MCF 10A (cell line): ENCODE measurements at regions of chr3 and their contacts with region 1.

Region 1: DNA sequence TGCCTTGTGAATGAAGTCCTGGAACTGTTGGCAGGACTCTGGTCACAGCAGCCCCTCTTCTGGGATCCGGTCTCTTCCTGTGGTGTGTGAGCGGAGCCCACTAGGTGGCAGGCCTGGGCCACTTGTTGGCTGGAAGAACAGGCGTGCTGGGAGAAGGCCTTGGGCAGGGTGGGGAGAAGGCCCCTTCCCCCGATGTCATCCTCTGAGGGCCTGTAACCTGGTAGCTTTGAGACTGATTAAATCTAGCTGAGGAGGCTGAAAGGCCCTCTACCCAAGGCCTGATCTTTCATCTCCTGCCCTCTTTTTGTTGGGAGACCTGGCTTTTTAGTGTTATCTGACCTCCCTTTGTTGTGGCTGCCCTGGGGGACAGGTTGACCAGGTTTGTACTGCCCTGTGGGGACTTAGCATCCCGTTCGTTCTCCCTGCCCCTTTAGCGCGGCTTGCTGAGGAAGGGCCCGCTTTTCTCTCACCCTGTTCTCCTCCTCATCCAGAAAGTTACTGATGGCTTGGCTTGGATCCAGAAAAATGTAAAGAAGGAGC is 48.3 kb downstream of the CHCHD6 start:
- DNase-seq: peak; percentile 81
- H3K4me3 Mint-ChIP-seq: no peak overlapping the region
- H3K27ac Mint-ChIP-seq: peak overlapping the region; percentile 76
- H3K4me1 Mint-ChIP-seq: peaks cover 39% of the 10 kb centered on the region
- H3K27me3 Mint-ChIP-seq: no peaks in the 10 kb centered on the region
- CTCF ChIP-seq: peak; percentile 84

Region 2: DNA sequence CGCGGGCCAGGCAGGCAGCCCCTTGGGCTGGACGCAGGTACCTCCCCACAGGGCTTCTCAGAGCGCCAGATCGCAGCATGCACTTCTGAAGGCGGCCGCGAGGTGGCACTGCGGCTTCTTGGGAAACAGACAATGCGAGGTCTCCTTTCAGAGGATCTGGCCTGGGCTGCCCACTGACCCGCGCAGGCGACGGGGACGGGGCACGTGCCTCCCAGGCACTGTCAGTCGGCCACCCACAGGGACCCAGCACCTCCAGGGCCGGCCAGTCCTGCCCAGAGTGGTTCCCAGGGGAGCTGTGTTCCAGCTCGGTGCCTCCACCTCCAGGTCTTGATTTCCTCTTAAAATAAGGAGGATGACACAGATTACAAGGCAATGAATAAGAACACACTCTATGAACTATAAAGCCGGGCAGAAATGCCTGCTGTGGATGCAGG is 73.0 kb before region 1 on chr3:
- CTCF ChIA-PET with region 1: interaction called, 9 read pairs
- POLR2A ChIA-PET with region 1: no interaction called
- intact Hi-C with region 1: loop called (anchors 2 kb)
- DNase-seq: peak; percentile 80
- H3K4me3 Mint-ChIP-seq: no peak overlapping the region
- H3K27ac Mint-ChIP-seq: no peak overlapping the region
- H3K4me1 Mint-ChIP-seq: no peaks in the 10 kb centered on the region
- H3K27me3 Mint-ChIP-seq: peaks cover 17% of the 10 kb centered on the region
- CTCF ChIP-seq: peak; percentile 98

Region 3: DNA sequence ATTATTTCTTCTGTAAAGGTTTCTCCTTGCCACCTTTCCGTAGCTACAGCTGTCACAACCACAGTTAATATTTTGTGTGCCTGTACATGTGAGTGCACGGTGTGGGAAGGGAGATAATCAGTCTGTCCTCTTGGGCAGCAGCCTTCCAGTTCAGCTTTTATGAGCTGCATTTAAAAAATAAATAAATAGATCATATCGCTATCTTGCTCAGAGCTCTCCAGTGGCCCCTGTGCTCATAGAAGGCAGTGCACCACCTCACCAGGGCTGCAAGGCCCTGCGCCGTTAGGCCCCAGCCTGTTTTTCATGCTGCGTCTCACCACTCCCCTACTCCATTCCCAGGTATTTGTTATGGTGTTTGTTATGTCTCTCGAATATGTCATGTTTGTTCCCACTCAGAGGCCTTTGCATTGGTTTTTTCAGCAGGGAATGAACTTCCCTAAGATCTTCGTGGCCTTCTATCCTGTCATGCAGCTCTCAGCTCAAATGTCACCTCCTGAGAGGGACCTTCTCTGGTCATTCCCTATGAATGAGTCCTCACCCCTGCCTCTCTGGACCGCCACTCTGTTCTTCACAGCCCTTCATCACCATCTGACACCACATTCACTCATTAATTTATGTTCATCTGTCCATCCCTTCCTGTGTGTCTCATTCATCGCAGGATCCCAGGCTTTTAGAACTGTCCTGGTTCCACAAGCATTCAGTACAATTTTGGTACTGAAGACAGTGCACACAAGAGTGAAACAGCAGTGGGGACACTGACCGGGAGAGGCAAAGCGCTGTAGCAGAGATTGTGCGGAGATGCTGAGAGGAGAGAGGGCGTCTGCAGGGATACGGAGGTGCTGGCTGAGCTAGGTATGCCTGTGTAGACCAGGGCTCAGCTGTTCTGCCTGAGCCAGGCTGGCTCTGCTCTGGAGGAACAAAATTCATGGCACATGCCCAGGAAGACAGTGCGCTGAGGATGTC is 83.8 kb after region 1 on chr3:
- CTCF ChIA-PET with region 1: interaction called, 6 read pairs
- POLR2A ChIA-PET with region 1: no interaction called
- intact Hi-C with region 1: loop called (anchors 5 kb)
- DNase-seq: no peak
- H3K4me3 Mint-ChIP-seq: no peak overlapping the region
- H3K27ac Mint-ChIP-seq: peak overlapping the region; percentile 41
- H3K4me1 Mint-ChIP-seq: peaks cover 25% of the 10 kb centered on the region
- H3K27me3 Mint-ChIP-seq: no peaks in the 10 kb centered on the region
- CTCF ChIP-seq: no peak

Region 4: GRCh38 chr3:126911162-126912026 is 159.0 kb after region 1 on chr3:
- CTCF ChIA-PET with region 1: interaction called, 9 read pairs
- POLR2A ChIA-PET with region 1: interaction called, 7 read pairs
- intact Hi-C with region 1: loop called (anchors 5 kb)
- DNase-seq: peak; percentile 99
- H3K4me3 Mint-ChIP-seq: peak overlapping the region; percentile 6
- H3K27ac Mint-ChIP-seq: peak overlapping the region; percentile 94
- H3K4me1 Mint-ChIP-seq: peaks cover 34% of the 10 kb centered on the region
- H3K27me3 Mint-ChIP-seq: no peaks in the 10 kb centered on the region
- CTCF ChIP-seq: no peak

Region 5: DNA sequence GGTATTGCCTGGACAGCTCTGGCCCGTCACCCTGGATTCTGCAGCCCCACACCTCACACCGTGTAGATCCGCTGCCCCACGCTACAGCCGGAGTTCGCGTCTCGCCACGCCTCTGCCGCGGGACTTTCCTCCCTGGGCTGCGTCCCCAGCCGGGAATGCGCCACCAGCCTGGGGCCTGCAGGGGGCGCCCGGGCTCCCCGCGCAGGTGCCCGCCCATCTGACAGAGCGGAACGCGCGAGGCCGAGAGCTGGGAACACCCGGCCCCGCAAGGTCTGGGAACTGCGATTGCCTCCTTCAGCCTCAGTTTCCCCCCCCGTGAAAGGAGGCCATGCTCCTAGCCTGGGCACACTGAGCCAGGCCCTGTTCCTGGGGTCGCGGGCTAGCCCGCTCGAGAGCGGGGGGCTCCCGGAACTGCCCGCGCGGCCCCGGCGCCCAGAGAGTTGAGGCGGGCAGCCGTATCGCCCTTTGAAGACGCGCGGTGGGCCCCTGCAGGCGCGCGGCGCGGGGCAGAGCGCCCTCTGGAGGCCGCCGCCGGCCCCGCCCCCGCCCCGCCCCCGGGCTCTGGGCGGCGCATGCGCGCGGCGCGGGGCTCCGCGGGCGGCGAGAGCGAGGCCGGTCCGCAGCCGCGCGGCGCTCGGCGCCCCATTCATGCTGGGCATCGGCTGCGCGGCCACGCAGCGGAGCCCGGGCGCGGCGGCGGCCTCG is 230.2 kb after region 1 on chr3 and contains the start of gene PLXNA1:
- CTCF ChIA-PET with region 1: interaction called, 91 read pairs
- POLR2A ChIA-PET with region 1: interaction called, 18 read pairs
- intact Hi-C with region 1: loop called (anchors 1 kb)
- DNase-seq: peak; percentile 83
- H3K4me3 Mint-ChIP-seq: peak within 1 kb of the TSS; percentile 69
- H3K27ac Mint-ChIP-seq: no peak within 1 kb of the TSS
- H3K4me1 Mint-ChIP-seq: peaks cover 22% of the 10 kb centered on the region
- H3K27me3 Mint-ChIP-seq: no peaks in the 10 kb centered on the region
- CTCF ChIP-seq: peak; percentile 93
- total RNA-seq, gene PLXNA1: 42.1 and 48.4 TPM in 2 replicates

Region 6: GRCh38 chr3:127448161-127448561 is 695.8 kb after region 1 on chr3:
- CTCF ChIA-PET with region 1: interaction called, 76 read pairs
- POLR2A ChIA-PET with region 1: no interaction called
- intact Hi-C with region 1: no loop called
- DNase-seq: peak; percentile 48
- H3K4me3 Mint-ChIP-seq: no peak overlapping the region
- H3K27ac Mint-ChIP-seq: no peak overlapping the region
- H3K4me1 Mint-ChIP-seq: peaks cover 7% of the 10 kb centered on the region
- H3K27me3 Mint-ChIP-seq: no peaks in the 10 kb centered on the region
- CTCF ChIP-seq: no peak